ENCODE measurements at regions of chr14 and their contacts with region 1.

Region 1: GRCh38 chr14:22653012-22653621 is 9.0 kb upstream of the OR6J1 start:
- DNase-seq: no peak
- H3K4me3 ChIP-seq: no peak overlapping the region
- H3K27ac ChIP-seq: no peak overlapping the region
- H3K4me1 ChIP-seq: peaks cover 0 to 5% (median 0%) of the 10 kb centered on the region in 4 donors
- H3K27me3 ChIP-seq: no peaks in the 10 kb centered on the region
- CTCF ChIP-seq: peak; percentile 69 to 83 (median 83)
- EP300 ChIP-seq: no peak
- POLR2A ChIP-seq: no peak

Region 2: DNA sequence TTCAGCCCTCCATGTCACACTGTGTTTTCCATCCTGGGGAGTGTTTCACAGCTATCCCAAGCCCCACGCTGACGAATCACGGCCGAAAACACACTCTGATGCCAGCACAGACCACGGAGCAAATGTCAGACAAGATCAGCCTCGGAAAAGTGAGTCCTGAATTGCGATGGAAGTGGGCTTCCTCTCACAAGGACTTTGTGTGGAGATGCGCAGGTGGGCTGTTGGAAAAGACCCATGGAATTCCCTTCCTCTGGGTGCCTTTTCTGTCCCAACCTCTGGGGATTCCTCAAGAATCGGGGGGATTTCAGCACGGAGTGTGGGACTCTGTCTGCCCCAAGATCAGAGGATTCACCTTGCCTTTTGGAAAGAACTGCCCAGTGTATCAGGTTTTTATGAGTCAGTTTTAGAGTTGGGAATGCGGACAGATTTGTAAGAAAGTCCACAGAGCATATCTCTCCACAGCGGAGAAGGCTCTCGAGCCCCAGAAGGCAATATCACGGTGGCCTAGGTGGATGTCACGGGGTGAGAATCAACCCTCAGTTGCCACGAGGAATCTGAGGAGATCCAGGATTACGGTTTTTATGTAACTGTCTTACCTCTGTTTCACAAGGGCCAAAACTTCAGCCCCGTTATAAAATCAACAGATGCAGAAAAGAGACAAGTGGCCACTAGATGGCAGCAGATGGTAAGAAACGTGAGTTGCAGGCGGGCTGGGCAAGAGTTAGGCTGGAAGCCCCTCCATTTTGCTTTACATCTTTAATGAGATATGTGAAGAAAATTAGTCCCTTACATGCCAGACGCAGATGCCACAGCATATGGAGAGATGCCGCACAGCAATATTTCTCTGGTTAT is 266.0 kb before region 1 on chr14:
- intact Hi-C with region 1: loop called (anchors 10 kb)
- DNase-seq: no peak
- H3K4me3 ChIP-seq: no peak overlapping the region
- H3K27ac ChIP-seq: no peak overlapping the region
- H3K4me1 ChIP-seq: peaks cover 0 to 6% (median 2%) of the 10 kb centered on the region in 4 donors
- H3K27me3 ChIP-seq: peaks cover 0 to 44% (median 0%) of the 10 kb centered on the region in 4 donors
- CTCF ChIP-seq: peak; percentile 71 to 78 (median 75)
- EP300 ChIP-seq: no peak
- POLR2A ChIP-seq: no peak

Region 3: GRCh38 chr14:22570132-22570949 is 82.8 kb before region 1 on chr14:
- intact Hi-C with region 1: loop called (anchors 5 kb)
- DNase-seq: no peak
- H3K4me3 ChIP-seq: no peak overlapping the region
- H3K27ac ChIP-seq: peak overlapping the region; percentile 16 to 56 (median 52)
- H3K4me1 ChIP-seq: peaks cover 15 to 32% (median 26%) of the 10 kb centered on the region in 4 donors
- H3K27me3 ChIP-seq: no peaks in the 10 kb centered on the region
- CTCF ChIP-seq: peak; percentile 84 to 91 (median 88)
- EP300 ChIP-seq: no peak
- POLR2A ChIP-seq: no peak

Region 4: GRCh38 chr14:22822571-22823098 is 169.5 kb after region 1 on chr14:
- intact Hi-C with region 1: loop called (anchors 10 kb)
- DNase-seq: peak; percentile 95
- H3K4me3 ChIP-seq: peak overlapping the region; percentile 52 to 67 (median 55)
- H3K27ac ChIP-seq: peak overlapping the region; percentile 65 to 84 (median 75)
- H3K4me1 ChIP-seq: peaks cover 20 to 55% (median 47%) of the 10 kb centered on the region in 4 donors
- H3K27me3 ChIP-seq: no peaks in the 10 kb centered on the region
- CTCF ChIP-seq: peak; percentile 89 to 94 (median 90)
- EP300 ChIP-seq: no peak
- POLR2A ChIP-seq: no peak